CD4-positive, alpha-beta memory T cell (primary cell): ENCODE measurements at regions of chr1 and their contacts with region 1.

Region 1: DNA sequence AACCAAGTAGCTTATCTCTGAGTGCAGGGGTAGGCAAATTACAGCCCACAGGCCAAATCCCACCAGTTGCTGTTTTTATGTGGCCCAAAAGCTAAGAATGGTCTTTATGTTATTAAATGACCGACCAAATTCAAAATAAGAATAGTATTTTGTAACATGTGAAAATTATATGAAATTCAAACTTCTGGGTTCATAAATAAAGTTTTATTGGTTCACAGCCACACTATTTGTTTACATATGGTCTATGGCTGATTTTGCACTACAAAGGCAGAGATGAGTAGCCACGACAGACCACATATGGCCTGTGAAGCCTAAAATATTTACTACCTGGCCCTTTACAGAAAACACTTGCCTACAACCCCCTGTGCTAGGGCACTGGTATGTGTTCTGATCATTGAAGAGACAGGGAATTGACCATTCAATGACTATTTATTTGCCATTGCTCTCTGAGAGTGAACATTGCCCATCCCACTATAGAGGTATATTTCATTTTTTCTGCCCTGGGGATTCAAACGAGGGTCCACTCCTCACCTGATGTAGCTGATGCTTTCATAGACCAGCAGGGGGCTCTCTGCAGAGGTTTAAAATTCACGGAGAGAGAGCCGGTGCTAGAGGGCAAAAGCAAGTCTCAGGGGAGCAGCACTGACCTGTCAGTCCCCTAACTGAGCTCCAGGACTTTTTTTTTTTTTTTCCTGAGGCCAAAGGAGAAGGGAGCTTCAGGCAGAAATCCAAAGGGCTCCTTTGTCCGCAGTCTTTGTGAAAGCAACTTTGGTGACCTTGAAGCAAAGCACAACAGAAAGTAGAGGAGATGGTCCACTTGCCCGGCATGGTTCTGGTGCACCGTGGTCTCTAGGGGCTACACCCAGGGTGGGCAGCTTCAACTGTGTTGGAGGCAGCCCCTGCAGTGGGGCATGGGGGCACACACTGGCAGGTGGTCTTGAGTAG is 7.3 kb upstream of the GNL2 start:
- DNase-seq: peak in 4 of 5 donors; percentile 47 to 58 (median 54)
- H3K4me3 ChIP-seq: no peak overlapping the region
- H3K4me3 Mint-ChIP-seq: no peak overlapping the region
- H3K27ac ChIP-seq: no peak overlapping the region
- H3K27ac Mint-ChIP-seq: peak overlapping the region in 1 of 7 donors; percentile 11
- H3K4me1 ChIP-seq: no peaks in the 10 kb centered on the region
- H3K4me1 Mint-ChIP-seq: peaks cover 0 to 7% (median 0%) of the 10 kb centered on the region in 4 donors
- H3K27me3 ChIP-seq: no peaks in the 10 kb centered on the region
- H3K27me3 Mint-ChIP-seq: peaks cover 5% of the 10 kb centered on the region in 2 donors

Region 2: GRCh38 chr1:37085397-37085796 is 517.6 kb before region 1 on chr1:
- CTCF ChIA-PET with region 1: no interaction called
- POLR2A ChIA-PET with region 1: no interaction called
- intact Hi-C with region 1: no loop called
- DNase-seq: no peak
- H3K4me3 ChIP-seq: no peak overlapping the region
- H3K4me3 Mint-ChIP-seq: no peak overlapping the region
- H3K27ac ChIP-seq: no peak overlapping the region
- H3K27ac Mint-ChIP-seq: no peak overlapping the region
- H3K4me1 ChIP-seq: no peaks in the 10 kb centered on the region
- H3K4me1 Mint-ChIP-seq: no peaks in the 10 kb centered on the region
- H3K27me3 ChIP-seq: no peaks in the 10 kb centered on the region
- H3K27me3 Mint-ChIP-seq: peaks cover 8 to 9% of the 10 kb centered on the region in 2 donors

Region 3: DNA sequence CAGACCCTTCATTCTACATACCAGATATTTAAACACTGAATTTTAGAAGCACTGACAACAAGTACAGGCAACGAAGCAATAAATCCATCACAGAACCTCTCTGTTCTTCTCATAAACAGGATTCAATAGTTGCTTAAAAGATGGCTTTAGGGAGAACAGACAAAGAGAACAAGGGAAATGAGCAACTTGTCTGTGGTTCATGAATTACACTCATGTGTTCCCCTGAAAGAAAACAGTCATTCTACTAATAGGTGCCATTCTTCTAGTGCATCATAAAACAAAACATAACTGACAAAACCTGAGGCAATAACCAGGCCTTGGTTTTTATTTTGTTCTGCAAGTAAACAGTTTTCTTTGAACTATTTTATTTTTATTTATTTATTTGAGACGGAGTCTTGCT is 14.1 kb before region 1 on chr1:
- CTCF ChIA-PET with region 1: interaction called, 11 read pairs
- POLR2A ChIA-PET with region 1: no interaction called
- intact Hi-C with region 1: no loop called
- DNase-seq: no peak
- H3K4me3 ChIP-seq: no peak overlapping the region
- H3K4me3 Mint-ChIP-seq: no peak overlapping the region
- H3K27ac ChIP-seq: no peak overlapping the region
- H3K27ac Mint-ChIP-seq: no peak overlapping the region
- H3K4me1 ChIP-seq: peaks cover 3% of the 10 kb centered on the region
- H3K4me1 Mint-ChIP-seq: peaks cover 3 to 12% (median 10%) of the 10 kb centered on the region in 4 donors
- H3K27me3 ChIP-seq: no peaks in the 10 kb centered on the region
- H3K27me3 Mint-ChIP-seq: no peaks in the 10 kb centered on the region

Region 4: GRCh38 chr1:37650173-37650572 is 47.2 kb after region 1 on chr1:
- CTCF ChIA-PET with region 1: no interaction called
- POLR2A ChIA-PET with region 1: no interaction called
- intact Hi-C with region 1: no loop called
- DNase-seq: no peak
- H3K4me3 ChIP-seq: no peak overlapping the region
- H3K4me3 Mint-ChIP-seq: no peak overlapping the region
- H3K27ac ChIP-seq: no peak overlapping the region
- H3K27ac Mint-ChIP-seq: no peak overlapping the region
- H3K4me1 ChIP-seq: no peaks in the 10 kb centered on the region
- H3K4me1 Mint-ChIP-seq: peaks cover 0 to 1% (median 0%) of the 10 kb centered on the region in 4 donors
- H3K27me3 ChIP-seq: no peaks in the 10 kb centered on the region
- H3K27me3 Mint-ChIP-seq: peaks cover 2 to 9% of the 10 kb centered on the region in 2 donors

Region 5: DNA sequence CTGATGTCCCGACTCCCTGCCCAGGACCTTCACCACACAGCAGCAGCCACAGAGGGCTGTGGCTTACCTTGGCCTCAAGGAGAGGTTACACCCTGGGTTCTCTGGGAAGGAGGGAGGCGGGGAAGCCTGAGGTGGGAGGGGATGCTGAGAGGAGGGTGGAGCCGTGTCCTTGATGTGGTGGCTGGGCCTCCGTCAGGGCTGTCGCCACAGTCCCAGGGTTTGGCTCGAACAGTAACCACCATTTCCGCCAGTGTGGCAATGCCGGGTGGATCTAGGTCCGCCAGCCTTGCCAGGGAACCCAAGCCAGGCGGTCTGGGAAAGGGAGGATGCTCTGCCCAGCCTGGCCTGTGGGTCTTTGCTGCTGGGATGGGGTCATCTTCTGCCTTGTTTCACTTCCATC is 70.9 kb after region 1 on chr1:
- CTCF ChIA-PET with region 1: interaction called, 228 read pairs
- POLR2A ChIA-PET with region 1: no interaction called
- intact Hi-C with region 1: loop called (anchors 2 kb)
- DNase-seq: peak; percentile 83 to 89 (median 85)
- H3K4me3 ChIP-seq: peak overlapping the region in 1 of 2 donors; percentile 29
- H3K4me3 Mint-ChIP-seq: peak overlapping the region in 7 of 8 donors; percentile 65 to 86 (median 79)
- H3K27ac ChIP-seq: no peak overlapping the region
- H3K27ac Mint-ChIP-seq: peak overlapping the region; percentile 29 to 95 (median 81)
- H3K4me1 ChIP-seq: peaks cover 26% of the 10 kb centered on the region
- H3K4me1 Mint-ChIP-seq: peaks cover 5 to 35% (median 26%) of the 10 kb centered on the region in 4 donors
- H3K27me3 ChIP-seq: no peaks in the 10 kb centered on the region
- H3K27me3 Mint-ChIP-seq: peaks cover 1 to 4% of the 10 kb centered on the region in 2 donors

Region 6: GRCh38 chr1:38392861-38393260 is 789.8 kb after region 1 on chr1:
- CTCF ChIA-PET with region 1: no interaction called
- POLR2A ChIA-PET with region 1: no interaction called
- intact Hi-C with region 1: no loop called
- DNase-seq: no peak
- H3K4me3 ChIP-seq: no peak overlapping the region
- H3K4me3 Mint-ChIP-seq: no peak overlapping the region
- H3K27ac ChIP-seq: no peak overlapping the region
- H3K27ac Mint-ChIP-seq: no peak overlapping the region
- H3K4me1 ChIP-seq: no peaks in the 10 kb centered on the region
- H3K4me1 Mint-ChIP-seq: no peaks in the 10 kb centered on the region
- H3K27me3 ChIP-seq: no peaks in the 10 kb centered on the region
- H3K27me3 Mint-ChIP-seq: peaks cover 33 to 41% of the 10 kb centered on the region in 2 donors